Activated CD4-positive, alpha-beta T cell treated with anti-CD3 and anti-CD28 coated beads, Interleukin-2, amount 10 ng/mL, durations not matched to agents 7 days and 5 days (primary cell): ENCODE measurements at regions of chr14 and their contacts with region 1.

Region 1: GRCh38 chr14:68564826-68565760 is 227.8 kb downstream of the ZFP36L1 start:
- DNase-seq: peak; percentile 43
- H3K4me3 Mint-ChIP-seq: no peak overlapping the region
- H3K27ac Mint-ChIP-seq: peak overlapping the region; percentile 67
- H3K4me1 Mint-ChIP-seq: peaks cover 26% of the 10 kb centered on the region
- H3K27me3 Mint-ChIP-seq: no peaks in the 10 kb centered on the region

Region 2: DNA sequence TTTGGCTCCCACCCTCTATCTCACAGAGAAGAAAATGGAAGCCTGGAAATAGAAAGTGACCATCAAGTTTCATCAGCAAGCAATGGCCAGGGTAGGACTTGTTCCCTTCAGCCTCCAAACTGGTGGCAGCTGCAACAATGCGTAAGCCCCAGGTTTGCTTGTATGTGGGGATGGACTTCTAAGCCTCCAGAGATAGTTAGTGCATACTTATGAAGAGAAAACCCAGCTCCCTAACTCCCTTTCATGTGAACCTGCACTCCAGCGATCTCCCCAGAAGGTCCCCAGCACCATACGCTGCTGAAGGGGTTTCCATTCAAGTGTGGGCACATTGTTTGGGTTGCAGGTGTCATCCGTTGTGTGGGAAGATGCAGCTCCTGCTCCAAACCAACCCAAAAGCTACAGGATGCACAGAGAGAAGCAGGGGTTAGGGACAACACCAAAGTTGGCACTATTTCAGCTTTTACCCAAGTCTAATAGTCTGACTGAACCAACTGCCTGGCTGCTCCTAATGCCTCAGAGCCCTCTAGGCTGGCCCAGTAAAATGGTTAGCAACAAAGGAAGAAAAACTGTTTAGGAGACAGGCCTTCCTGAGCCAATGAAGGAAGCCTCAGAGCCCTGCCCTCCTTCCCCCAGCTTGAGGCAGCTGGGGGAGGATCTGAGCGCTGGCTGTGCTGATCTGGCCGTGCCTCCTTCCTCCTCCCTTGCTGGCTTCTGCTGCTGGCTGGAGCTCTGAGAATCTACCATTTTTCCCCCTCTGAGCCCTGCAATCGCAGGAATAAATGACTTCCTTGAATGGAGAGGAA is 215.5 kb after region 1 on chr14:
- CTCF ChIA-PET with region 1: no interaction called
- POLR2A ChIA-PET with region 1: interaction called, 10 read pairs
- DNase-seq: peak; percentile 68
- H3K4me3 Mint-ChIP-seq: peak overlapping the region; percentile 63
- H3K27ac Mint-ChIP-seq: peak overlapping the region; percentile 95
- H3K4me1 Mint-ChIP-seq: peaks cover 75% of the 10 kb centered on the region
- H3K27me3 Mint-ChIP-seq: no peaks in the 10 kb centered on the region